IMR-90 (cell line): ENCODE measurements at regions of chr11 and their contacts with region 1.

Region 1: GRCh38 chr11:121318848-121319834 is 26.6 kb downstream of the SC5D start:
- DNase-seq: peak; percentile 56
- ATAC-seq: peak; percentile 89
- H3K4me3 ChIP-seq: no peak overlapping the region
- H3K27ac ChIP-seq: no peak overlapping the region
- H3K4me1 ChIP-seq: no peaks in the 10 kb centered on the region
- H3K27me3 ChIP-seq: peaks cover 12% of the 10 kb centered on the region
- CTCF ChIP-seq: peak; percentile 73
- POLR2A ChIP-seq: no peak
- RAD21 ChIP-seq: peak; percentile 65

Region 2: GRCh38 chr11:121249039-121249663 is 70.0 kb before region 1 on chr11:
- CTCF ChIA-PET with region 1: no interaction called
- POLR2A ChIA-PET with region 1: no interaction called
- dilution Hi-C with region 1: no loop called
- in situ Hi-C with region 1: no loop called
- intact Hi-C with region 1: loop called (anchors 2 kb)
- DNase-seq: peak; percentile 48
- ATAC-seq: peak; percentile 94
- H3K4me3 ChIP-seq: no peak overlapping the region
- H3K27ac ChIP-seq: no peak overlapping the region
- H3K4me1 ChIP-seq: no peaks in the 10 kb centered on the region
- H3K27me3 ChIP-seq: peaks cover 3% of the 10 kb centered on the region
- CTCF ChIP-seq: peak; percentile 67
- POLR2A ChIP-seq: no peak
- RAD21 ChIP-seq: peak; percentile 47

Region 3: GRCh38 chr11:121270001-121270678 is 49.0 kb before region 1 on chr11:
- CTCF ChIA-PET with region 1: no interaction called
- POLR2A ChIA-PET with region 1: no interaction called
- dilution Hi-C with region 1: no loop called
- in situ Hi-C with region 1: no loop called
- intact Hi-C with region 1: no loop called
- DNase-seq: no peak
- ATAC-seq: no peak
- H3K4me3 ChIP-seq: no peak overlapping the region
- H3K27ac ChIP-seq: no peak overlapping the region
- H3K4me1 ChIP-seq: no peaks in the 10 kb centered on the region
- H3K27me3 ChIP-seq: peaks cover 30% of the 10 kb centered on the region
- CTCF ChIP-seq: no peak
- POLR2A ChIP-seq: no peak
- RAD21 ChIP-seq: no peak